Endothelial cell of umbilical vein (primary cell): ENCODE measurements at regions of chr18 and their contacts with region 1.

Region 1: GRCh38 chr18:56458770-56459712 is 179.4 kb downstream of the TXNL1 start:
- DNase-seq: peak; percentile 95
- H3K4me3 ChIP-seq: no peak overlapping the region
- H3K27ac ChIP-seq: peak overlapping the region; percentile 65
- H3K4me1 ChIP-seq: peaks cover 28% of the 10 kb centered on the region
- H3K27me3 ChIP-seq: no peaks in the 10 kb centered on the region
- CTCF ChIP-seq: no peak
- POLR2A ChIP-seq: no peak

Region 2: GRCh38 chr18:55384551-55385275 is 1074.3 kb before region 1 on chr18:
- CTCF ChIA-PET with region 1: no interaction called
- POLR2A ChIA-PET with region 1: no interaction called
- dilution Hi-C with region 1: no loop called
- intact Hi-C with region 1: loop called (anchors 1 kb)
- DNase-seq: peak; percentile 67
- H3K4me3 ChIP-seq: no peak overlapping the region
- H3K27ac ChIP-seq: no peak overlapping the region
- H3K4me1 ChIP-seq: peaks cover 39% of the 10 kb centered on the region
- H3K27me3 ChIP-seq: no peaks in the 10 kb centered on the region
- CTCF ChIP-seq: peak; percentile 69 to 74
- POLR2A ChIP-seq: no peak

Region 3: DNA sequence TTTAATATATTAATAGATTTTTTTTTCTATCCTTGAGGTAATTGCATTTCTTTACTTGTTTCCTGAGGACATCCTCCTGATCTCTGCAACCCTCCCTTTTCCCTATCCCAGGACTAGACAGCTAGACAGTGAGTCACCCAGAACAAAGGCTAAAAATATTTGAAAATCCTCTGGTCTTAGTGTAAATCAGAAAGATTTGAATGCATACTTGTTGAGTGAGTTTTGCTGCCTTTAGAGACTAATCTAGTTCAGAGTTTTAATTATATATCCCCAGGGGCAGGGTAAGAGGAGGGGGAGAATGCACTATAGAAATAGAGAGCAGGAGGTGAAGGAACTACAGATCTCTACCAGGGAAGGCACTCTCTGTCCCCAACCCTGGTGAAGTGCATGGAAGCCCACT is 668.7 kb before region 1 on chr18:
- CTCF ChIA-PET with region 1: no interaction called
- POLR2A ChIA-PET with region 1: no interaction called
- dilution Hi-C with region 1: no loop called
- intact Hi-C with region 1: loop called (anchors 1 kb)
- DNase-seq: peak; percentile 84
- H3K4me3 ChIP-seq: no peak overlapping the region
- H3K27ac ChIP-seq: peak overlapping the region; percentile 81
- H3K4me1 ChIP-seq: peaks cover 19% of the 10 kb centered on the region
- H3K27me3 ChIP-seq: no peaks in the 10 kb centered on the region
- CTCF ChIP-seq: no peak
- POLR2A ChIP-seq: no peak

Region 4: GRCh38 chr18:56083097-56083521 is 375.9 kb before region 1 on chr18:
- CTCF ChIA-PET with region 1: no interaction called
- POLR2A ChIA-PET with region 1: no interaction called
- dilution Hi-C with region 1: no loop called
- intact Hi-C with region 1: loop called (anchors 1 kb)
- DNase-seq: peak; percentile 99
- H3K4me3 ChIP-seq: no peak overlapping the region
- H3K27ac ChIP-seq: peak overlapping the region; percentile 95
- H3K4me1 ChIP-seq: peaks cover 26% of the 10 kb centered on the region
- H3K27me3 ChIP-seq: no peaks in the 10 kb centered on the region
- CTCF ChIP-seq: peak; percentile 24 to 46
- POLR2A ChIP-seq: peak; percentile 71

Region 5: DNA sequence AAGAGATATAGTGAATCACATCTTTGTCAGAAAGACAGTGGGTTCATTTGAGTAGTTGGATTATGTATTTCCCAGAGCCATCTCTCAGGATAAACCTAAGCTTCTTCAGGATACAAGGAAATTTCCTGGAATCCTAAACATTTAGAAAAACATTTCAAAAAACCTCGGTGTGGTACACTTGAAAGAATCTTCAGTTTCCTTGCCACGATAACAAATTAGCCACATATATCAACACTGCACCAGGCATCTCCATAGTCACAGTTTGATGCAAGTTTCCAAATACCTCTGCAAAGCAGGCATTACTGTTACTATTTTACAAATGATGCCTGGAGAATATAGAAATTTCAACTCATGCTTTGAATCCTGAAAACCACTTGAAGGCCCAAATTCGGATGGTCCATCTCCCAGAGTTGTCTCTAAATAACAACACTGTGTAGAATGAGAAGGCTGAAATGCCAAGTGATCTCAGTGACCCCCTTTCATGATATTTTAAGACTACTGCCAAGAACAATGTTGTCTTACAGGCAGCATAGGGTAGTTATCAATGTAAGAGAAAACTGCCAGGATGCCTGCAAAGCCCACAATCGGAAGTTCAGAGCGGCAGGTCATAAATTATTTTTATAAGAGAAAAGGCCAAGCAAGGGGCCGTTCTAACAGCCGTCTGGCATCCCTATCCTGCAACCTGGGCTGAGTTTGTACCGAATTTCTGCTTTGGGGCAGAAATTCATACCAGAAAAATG is 128.5 kb before region 1 on chr18:
- CTCF ChIA-PET with region 1: no interaction called
- POLR2A ChIA-PET with region 1: no interaction called
- dilution Hi-C with region 1: no loop called
- intact Hi-C with region 1: loop called (anchors 1 kb)
- DNase-seq: peak; percentile 93
- H3K4me3 ChIP-seq: no peak overlapping the region
- H3K27ac ChIP-seq: no peak overlapping the region
- H3K4me1 ChIP-seq: peaks cover 17% of the 10 kb centered on the region
- H3K27me3 ChIP-seq: no peaks in the 10 kb centered on the region
- CTCF ChIP-seq: no peak
- POLR2A ChIP-seq: no peak